Gastrocnemius medialis (tissue), 4 donors: ENCODE measurements at regions of chr19 and their contacts with region 1.

Region 1: DNA sequence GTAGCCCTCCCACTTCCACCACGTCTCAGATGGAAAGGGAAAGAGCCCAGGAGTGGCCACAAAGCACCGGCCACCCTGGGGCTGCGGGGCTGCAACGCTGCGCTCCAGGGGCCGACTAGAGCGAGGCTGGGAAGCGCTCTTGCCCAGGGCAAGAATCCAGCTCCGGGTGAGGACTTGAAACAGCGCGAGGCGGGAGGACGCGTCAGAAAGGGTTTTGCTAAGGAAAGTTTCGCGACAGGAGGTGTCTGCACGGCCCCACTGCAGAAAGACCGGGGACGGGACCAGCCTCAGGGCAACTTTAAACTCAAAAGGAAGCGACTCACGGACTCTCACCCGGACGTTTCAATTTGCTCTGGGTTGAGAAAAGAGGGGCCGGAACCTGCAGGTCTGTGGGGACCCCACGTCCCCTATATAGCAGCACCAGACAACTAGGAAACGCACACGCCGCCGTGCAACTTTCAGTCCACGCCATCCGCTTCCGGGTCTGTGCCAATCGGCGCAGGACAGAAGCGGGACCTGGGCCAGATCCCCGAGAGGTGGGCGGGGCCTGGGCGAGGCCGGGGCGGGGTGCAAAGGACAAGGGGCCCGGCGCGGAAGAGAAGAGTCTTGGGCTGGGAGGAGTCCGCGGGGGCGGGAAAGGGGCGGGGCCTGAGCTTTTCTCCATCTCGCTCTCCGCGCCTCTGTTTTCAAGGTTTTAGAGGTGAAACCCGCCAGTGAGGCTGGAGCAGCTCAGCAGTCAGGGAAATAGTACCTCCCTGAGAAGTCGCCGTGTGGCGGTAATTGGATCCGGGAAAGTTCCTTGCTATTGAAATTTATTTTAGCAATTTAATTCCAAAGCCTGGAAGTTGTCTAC is at the start of gene ZNF816:
- DNase-seq: peak; percentile 82 to 86
- ATAC-seq: peak; percentile 93 to 94
- H3K4me3 ChIP-seq: peak within 1 kb of the TSS; percentile 57 to 70 (median 62)
- H3K27ac ChIP-seq: peak within 1 kb of the TSS; percentile 41 to 78 (median 64)
- H3K4me1 ChIP-seq: no peaks in the 10 kb centered on the region
- H3K27me3 ChIP-seq: no peaks in the 10 kb centered on the region
- CTCF ChIP-seq: no peak
- POLR2A ChIP-seq: peak; percentile 15 to 21
- total RNA-seq, gene ZNF816: 1.0 to 3.1 (median 1.6) TPM

Region 2: DNA sequence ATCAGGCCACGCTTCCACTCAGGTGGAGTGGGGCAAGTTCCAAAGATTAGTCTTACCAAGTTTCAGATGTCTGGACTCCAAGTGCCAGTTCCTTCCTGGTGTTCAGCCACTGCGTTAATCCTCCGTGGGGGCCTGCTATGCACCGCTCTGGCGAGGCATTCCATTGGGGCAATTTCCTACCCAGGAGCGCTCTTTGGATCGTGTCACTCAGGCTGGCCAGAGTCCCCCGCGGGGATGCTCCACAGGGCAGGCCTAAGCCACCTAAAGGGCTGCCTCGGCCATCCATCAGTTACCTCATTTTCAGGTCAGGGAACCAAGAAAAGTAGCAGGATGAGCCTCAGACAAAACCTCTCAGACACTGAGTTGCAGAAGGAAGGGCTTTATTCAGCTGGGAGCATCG is 58.6 kb before region 1 on chr19:
- in situ Hi-C with region 1: no loop called
- intact Hi-C with region 1: no loop called
- DNase-seq: no peak
- ATAC-seq: no peak
- H3K4me3 ChIP-seq: no peak overlapping the region
- H3K27ac ChIP-seq: no peak overlapping the region
- H3K4me1 ChIP-seq: no peaks in the 10 kb centered on the region
- H3K27me3 ChIP-seq: no peaks in the 10 kb centered on the region
- CTCF ChIP-seq: no peak
- POLR2A ChIP-seq: no peak

Region 3: GRCh38 chr19:52922841-52923777 is 39.5 kb before region 1 on chr19 and contains the start of gene ZNF888:
- in situ Hi-C with region 1: no loop called
- intact Hi-C with region 1: loop called (anchors 1 kb)
- DNase-seq: peak; percentile 48 to 64
- ATAC-seq: peak; percentile 68 to 86
- H3K4me3 ChIP-seq: peak within 1 kb of the TSS; percentile 65 to 83 (median 66)
- H3K27ac ChIP-seq: peak within 1 kb of the TSS; percentile 64 to 79 (median 70)
- H3K4me1 ChIP-seq: no peaks in the 10 kb centered on the region
- H3K27me3 ChIP-seq: peaks cover 0 to 7% (median 0%) of the 10 kb centered on the region in 3 donors
- CTCF ChIP-seq: no peak
- POLR2A ChIP-seq: peak; percentile 13 to 27
- total RNA-seq, gene ZNF888: 0.15 to 0.29 (median 0.20) TPM

Region 4: GRCh38 chr19:52942386-52943133 is 20.1 kb before region 1 on chr19:
- in situ Hi-C with region 1: no loop called
- intact Hi-C with region 1: loop called (anchors 1 kb)
- DNase-seq: peak; percentile 68 to 79
- ATAC-seq: peak; percentile 82 to 86
- H3K4me3 ChIP-seq: peak overlapping the region; percentile 65 to 68 (median 66)
- H3K27ac ChIP-seq: peak overlapping the region; percentile 61 to 79 (median 68)
- H3K4me1 ChIP-seq: no peaks in the 10 kb centered on the region
- H3K27me3 ChIP-seq: no peaks in the 10 kb centered on the region
- CTCF ChIP-seq: no peak
- POLR2A ChIP-seq: peak; percentile 23 to 40

Region 5: DNA sequence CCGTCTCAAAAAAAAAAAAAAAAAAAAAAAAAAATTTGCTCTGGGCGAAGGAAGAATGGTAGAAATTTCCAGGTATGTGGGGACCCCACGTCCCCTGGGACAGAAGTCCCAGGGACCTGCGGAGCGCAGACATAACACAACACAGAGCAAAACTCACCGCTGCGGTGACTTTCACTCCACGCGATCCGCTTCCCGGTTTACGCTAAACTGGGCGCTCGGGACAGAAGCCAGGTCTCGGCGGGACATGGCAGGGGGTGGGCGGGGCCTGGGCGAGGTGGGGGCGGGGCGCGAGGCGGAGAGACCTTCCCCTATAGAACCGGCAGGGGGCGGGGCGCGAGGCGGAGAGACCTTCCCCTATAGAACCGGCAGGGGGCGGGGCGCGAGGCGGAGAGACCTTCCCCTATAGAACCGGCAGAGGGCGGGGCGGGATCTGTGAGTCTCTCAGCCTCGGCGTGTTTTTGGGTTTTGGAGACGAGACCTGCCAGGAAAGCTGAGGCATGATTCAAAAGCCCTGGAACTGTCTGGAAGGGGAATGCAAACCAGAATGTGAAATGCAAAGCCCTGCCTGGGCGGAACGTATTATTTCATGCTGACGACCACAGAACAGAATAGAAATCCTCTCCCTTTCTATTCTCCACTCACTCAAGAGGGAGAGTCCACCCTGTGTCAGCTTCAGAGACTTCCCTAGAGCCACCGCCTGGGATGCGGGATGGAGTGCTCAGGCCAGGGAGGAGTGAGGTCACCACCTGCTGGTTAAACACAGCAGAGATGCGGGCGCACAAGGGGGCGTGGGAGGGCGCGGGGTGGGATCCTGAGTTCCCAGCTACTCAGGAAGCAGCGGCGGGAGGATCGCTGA is 30.9 kb after region 1 on chr19:
- in situ Hi-C with region 1: no loop called
- intact Hi-C with region 1: loop called (anchors 2 kb)
- DNase-seq: peak; percentile 17 to 27
- ATAC-seq: peak; percentile 39 to 52
- H3K4me3 ChIP-seq: peak overlapping the region; percentile 47 to 59 (median 56)
- H3K27ac ChIP-seq: peak overlapping the region; percentile 30 to 61 (median 49)
- H3K4me1 ChIP-seq: peaks cover 0 to 9% of the 10 kb centered on the region in 2 donors
- H3K27me3 ChIP-seq: peaks cover 0 to 8% (median 7%) of the 10 kb centered on the region in 3 donors
- CTCF ChIP-seq: peak in 2 of 5 experiments; percentile 59 to 66
- POLR2A ChIP-seq: no peak

Region 6: GRCh38 chr19:53103198-53103944 is 140.8 kb after region 1 on chr19 and contains the start of gene ZNF160:
- in situ Hi-C with region 1: no loop called
- intact Hi-C with region 1: loop called (anchors 5 kb)
- DNase-seq: peak; percentile 97
- ATAC-seq: peak; percentile 97 to 98
- H3K4me3 ChIP-seq: peak within 1 kb of the TSS; percentile 81 to 98 (median 95)
- H3K27ac ChIP-seq: peak within 1 kb of the TSS; percentile 88 to 94 (median 91)
- H3K4me1 ChIP-seq: peaks cover 13 to 17% of the 10 kb centered on the region in 2 donors
- H3K27me3 ChIP-seq: no peaks in the 10 kb centered on the region
- CTCF ChIP-seq: no peak
- POLR2A ChIP-seq: peak; percentile 83 to 86
- total RNA-seq, gene ZNF160: 8.3 to 20.7 (median 11.9) TPM